Mucosa of descending colon (tissue), 3 donors: ENCODE measurements at regions of chr6 and their contacts with region 1.

Region 1: DNA sequence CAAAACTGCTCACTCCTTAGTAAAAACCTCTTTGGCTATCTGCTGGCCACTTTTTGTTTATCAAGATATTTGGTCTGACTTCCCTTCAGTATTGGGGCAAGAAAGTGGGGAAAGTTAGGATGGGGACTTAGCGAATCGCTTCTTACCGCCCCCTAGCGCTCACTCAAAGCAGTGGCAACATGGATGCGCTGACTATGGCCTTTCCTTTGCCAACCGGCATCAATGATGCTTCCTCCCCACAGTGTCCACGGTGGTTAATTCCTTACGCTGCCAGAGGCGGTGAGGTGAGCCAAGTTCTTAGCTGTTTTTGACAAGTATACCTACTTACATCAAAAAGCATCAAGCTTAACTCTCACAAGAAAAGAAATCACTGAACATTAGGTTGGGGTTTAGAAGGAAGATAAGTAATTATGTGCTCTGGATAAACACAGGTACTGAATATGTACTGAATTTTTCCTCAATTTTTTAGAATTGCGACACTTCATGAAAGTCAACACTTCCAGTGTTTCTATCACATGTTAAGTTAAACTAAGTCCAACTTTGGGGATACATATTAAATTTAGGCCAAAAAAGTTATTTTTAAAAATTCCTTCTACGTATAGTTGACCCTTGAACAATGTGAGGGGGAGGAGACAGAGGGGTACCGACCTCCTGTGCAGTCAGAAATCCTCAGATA is 86.7 kb downstream of the GMDS start:
- DNase-seq: no peak
- ATAC-seq: no peak
- H3K4me3 ChIP-seq: no peak overlapping the region
- H3K4me1 ChIP-seq: peaks cover 5% of the 10 kb centered on the region
- CTCF ChIP-seq: no peak

Region 2: DNA sequence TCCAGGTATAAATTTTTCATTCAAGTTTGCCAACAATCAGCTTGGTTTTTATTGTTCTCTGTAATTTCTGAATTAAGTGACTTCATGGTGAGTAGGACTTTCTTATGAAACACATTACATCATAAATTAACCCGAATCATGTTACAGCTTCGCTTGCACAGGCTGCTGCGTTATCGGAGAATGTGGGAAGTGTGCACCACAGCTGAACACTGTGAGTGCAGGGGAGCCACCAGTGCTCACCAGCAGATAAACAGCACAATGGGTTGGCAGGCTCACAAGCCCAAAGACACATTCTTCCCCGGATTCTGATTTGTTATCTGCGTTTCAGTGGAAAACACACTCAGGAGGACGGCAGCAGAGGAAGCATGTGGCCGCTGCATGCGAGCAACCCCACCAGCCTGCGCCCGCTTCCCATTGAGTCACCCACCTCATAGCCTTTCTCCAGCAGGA is 34.4 kb before region 1 on chr6:
- intact Hi-C with region 1: no loop called
- DNase-seq: no peak
- ATAC-seq: no peak
- H3K4me3 ChIP-seq: no peak overlapping the region
- H3K4me1 ChIP-seq: no peaks in the 10 kb centered on the region
- CTCF ChIP-seq: no peak

Region 3: DNA sequence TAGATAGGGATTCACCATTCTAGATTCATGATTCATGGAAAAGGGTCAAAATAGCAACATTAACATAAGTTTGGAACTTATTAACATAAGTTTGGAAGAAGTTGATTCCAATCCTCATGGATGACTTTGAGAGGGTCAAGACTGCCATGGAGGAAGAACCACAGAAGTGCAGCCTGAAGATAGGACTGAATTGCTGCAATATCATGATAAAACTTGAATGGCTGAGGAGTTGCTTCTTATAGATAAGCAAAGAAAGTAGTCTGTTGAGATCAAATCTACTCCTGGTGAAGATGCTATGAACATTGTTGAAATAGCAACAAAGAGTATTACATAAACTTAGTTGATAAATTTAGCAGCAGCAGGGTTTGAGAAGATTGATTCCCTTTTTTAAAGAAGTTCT is 24.5 kb after region 1 on chr6:
- intact Hi-C with region 1: loop called in 1 of 2 experiments (anchors 2 kb)
- DNase-seq: no peak
- ATAC-seq: no peak
- H3K4me3 ChIP-seq: no peak overlapping the region
- H3K4me1 ChIP-seq: no peaks in the 10 kb centered on the region
- CTCF ChIP-seq: no peak

Region 4: GRCh38 chr6:2209226-2209809 is 50.6 kb after region 1 on chr6:
- intact Hi-C with region 1: no loop called
- DNase-seq: peak in 2 of 3 donors; percentile 77 to 87
- ATAC-seq: peak; percentile 97
- H3K4me3 ChIP-seq: no peak overlapping the region
- H3K4me1 ChIP-seq: no peaks in the 10 kb centered on the region
- CTCF ChIP-seq: peak; percentile 17